HEK293 (cell line): ENCODE measurements at regions of chr11 and their contacts with region 1.

Region 1: DNA sequence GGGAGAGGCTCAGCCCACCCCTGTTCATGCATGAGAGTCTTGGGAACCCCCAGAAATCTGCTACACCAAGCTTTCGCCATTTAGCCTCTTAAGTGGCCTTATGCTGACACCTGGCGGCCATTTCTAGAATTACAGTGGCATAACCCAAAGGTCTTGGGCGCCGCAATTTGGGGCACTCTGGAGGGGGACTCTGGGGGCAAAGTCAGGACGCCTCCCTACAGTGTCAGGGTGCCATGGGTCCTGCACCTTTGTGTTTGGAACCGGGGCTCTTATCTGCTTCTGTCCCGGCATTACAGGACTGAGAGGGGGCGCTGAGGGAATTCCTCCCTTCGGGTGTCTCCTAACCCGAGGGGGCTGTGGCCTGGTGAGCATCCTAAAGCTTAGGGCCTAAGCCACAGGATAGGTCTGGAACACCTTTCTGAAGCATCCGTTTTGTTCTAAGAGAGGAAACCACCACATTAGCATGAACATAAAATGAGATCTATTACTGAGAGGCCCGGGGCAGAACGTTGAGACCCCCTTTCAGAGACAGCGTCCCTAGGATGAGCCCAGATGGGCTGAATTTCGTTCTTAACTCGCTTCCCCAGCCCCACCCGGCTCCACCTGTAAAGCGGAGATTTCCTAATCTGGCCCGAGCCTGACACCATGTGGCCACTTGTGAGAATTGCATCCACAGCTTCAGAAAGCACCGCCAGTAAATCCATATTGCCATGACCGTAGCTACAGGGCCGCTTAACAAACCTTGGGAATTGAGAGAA is 9.3 kb downstream of the INS start:
- H3K4me3 ChIP-seq: no peak overlapping the region
- H3K27ac ChIP-seq: no peak overlapping the region
- H3K4me1 ChIP-seq: no peaks in the 10 kb centered on the region
- CTCF ChIP-seq: peak; percentile 27

Region 2: GRCh38 chr11:1652771-1653540 is 498.7 kb before region 1 on chr11:
- CTCF ChIA-PET with region 1: interaction called, 138 read pairs
- POLR2A ChIA-PET with region 1: interaction called, 4 read pairs
- H3K4me3 ChIP-seq: no peak overlapping the region
- H3K27ac ChIP-seq: no peak overlapping the region
- H3K4me1 ChIP-seq: no peaks in the 10 kb centered on the region
- CTCF ChIP-seq: peak; percentile 81

Region 3: GRCh38 chr11:1837171-1838076 is 314.3 kb before region 1 on chr11:
- CTCF ChIA-PET with region 1: interaction called, 69 read pairs
- POLR2A ChIA-PET with region 1: no interaction called
- H3K4me3 ChIP-seq: no peak overlapping the region
- H3K27ac ChIP-seq: no peak overlapping the region
- H3K4me1 ChIP-seq: no peaks in the 10 kb centered on the region
- CTCF ChIP-seq: peak; percentile 59

Region 4: GRCh38 chr11:1882519-1883238 is 269.0 kb before region 1 on chr11:
- CTCF ChIA-PET with region 1: interaction called, 119 read pairs
- POLR2A ChIA-PET with region 1: interaction called, 4 read pairs
- H3K4me3 ChIP-seq: no peak overlapping the region
- H3K27ac ChIP-seq: no peak overlapping the region
- H3K4me1 ChIP-seq: no peaks in the 10 kb centered on the region
- CTCF ChIP-seq: peak; percentile 82

Region 5: GRCh38 chr11:2002807-2003206 is 148.9 kb before region 1 on chr11:
- CTCF ChIA-PET with region 1: interaction called, 50 read pairs
- POLR2A ChIA-PET with region 1: no interaction called
- H3K4me3 ChIP-seq: no peak overlapping the region
- H3K27ac ChIP-seq: no peak overlapping the region
- H3K4me1 ChIP-seq: no peaks in the 10 kb centered on the region
- CTCF ChIP-seq: no peak

Region 6: DNA sequence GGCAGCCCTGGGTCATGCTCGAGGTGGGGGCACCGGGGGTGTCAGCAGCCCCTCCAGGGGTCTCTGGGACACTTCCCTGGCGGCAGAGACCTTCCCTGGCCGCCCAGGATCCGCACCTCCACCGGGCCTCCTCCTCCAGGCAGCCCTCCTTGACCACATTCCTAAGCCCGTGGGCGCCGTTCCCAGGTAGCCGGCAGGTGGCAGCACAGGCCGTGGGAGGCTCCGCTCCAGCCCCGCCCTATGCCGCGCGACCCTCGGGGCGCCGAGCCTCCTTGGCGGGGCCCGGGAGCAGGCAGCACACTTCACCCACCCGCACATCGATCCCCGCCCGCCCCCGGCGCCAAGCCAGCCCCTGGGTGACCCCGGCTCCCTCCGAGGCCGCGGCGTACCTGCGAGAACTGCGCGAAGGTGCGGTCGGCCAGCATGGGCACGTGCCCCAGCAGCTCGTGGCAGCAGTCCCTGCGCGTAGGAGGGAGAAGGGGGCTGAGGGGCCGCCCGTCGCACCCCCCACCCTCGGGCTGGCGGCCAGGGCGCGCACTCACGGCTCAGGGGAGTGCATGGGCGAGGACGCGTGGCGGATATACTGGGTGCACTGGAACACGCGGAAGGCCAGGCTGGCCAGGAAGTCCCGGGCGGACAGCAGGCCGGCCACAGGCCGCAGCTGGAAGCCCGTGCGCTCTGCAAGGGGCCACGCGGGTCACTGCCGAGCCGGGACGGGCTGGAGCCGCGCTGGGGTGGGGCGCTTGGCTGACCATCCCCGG is 14.6 kb after region 1 on chr11:
- CTCF ChIA-PET with region 1: interaction called, 12 read pairs
- POLR2A ChIA-PET with region 1: no interaction called
- H3K4me3 ChIP-seq: no peak overlapping the region
- H3K27ac ChIP-seq: no peak overlapping the region
- H3K4me1 ChIP-seq: no peaks in the 10 kb centered on the region
- CTCF ChIP-seq: peak; percentile 17; the same call in 1 of the 2 replicates